HEK293 (cell line): ENCODE measurements at regions of chr6 and their contacts with region 1.

Region 1: GRCh38 chr6:35731736-35732532 is 4.9 kb upstream of the ARMC12 start:
- H3K4me3 ChIP-seq: peak overlapping the region; percentile 68
- H3K27ac ChIP-seq: peak overlapping the region; percentile 79
- H3K4me1 ChIP-seq: peaks cover 13% of the 10 kb centered on the region
- CTCF ChIP-seq: peak; percentile 88

Region 2: DNA sequence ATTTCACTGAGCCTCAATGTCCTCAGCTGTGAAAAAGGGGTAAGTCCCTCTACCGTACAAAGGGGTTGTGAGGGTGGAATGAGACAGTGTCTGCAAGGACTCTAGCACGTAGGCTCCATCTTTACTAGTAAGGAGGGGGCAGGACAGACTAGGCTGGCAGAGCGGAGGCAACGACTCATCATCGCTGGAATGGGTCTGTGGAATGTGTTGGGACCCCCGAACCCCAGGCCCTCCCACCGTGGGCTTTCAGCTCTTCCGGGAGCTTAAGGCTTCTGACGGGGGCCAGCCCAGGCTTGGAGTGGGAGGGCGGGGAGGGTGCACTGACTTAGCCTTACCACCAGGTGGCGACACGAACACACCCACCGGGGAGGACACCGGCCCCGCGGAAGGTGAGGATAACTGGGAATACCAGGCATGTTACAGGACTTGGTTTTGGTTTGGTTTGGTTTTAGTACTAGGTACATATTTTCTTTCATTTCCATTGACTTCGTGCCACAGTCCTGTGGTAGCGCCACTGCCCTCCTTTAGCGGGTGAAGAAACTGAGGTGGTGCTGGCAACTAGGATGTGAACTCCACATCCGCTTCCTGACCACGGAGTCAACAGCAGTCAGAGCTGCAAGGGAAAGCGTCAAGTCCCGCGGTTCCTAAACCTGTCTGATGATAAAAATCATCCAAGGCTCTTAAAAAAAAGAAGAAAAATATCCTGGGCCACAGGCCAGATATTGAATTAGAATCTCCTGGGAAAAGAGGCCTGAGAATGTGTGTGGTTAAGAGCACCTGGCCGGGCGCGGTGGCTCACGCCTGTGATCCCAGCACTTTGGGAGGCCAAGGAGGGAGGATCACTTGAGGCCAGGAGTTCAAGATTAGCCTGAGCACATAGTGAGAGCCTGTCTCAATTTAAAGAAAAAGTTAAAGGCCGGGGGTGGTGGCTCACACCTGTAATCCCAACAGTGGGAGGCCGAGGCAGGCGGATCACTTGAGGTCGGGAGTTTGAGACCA is 209.0 kb before region 1 on chr6:
- CTCF ChIA-PET with region 1: interaction called, 110 read pairs
- POLR2A ChIA-PET with region 1: interaction called, 9 read pairs
- H3K4me3 ChIP-seq: no peak overlapping the region
- H3K27ac ChIP-seq: no peak overlapping the region
- H3K4me1 ChIP-seq: no peaks in the 10 kb centered on the region
- CTCF ChIP-seq: peak; percentile 84

Region 3: DNA sequence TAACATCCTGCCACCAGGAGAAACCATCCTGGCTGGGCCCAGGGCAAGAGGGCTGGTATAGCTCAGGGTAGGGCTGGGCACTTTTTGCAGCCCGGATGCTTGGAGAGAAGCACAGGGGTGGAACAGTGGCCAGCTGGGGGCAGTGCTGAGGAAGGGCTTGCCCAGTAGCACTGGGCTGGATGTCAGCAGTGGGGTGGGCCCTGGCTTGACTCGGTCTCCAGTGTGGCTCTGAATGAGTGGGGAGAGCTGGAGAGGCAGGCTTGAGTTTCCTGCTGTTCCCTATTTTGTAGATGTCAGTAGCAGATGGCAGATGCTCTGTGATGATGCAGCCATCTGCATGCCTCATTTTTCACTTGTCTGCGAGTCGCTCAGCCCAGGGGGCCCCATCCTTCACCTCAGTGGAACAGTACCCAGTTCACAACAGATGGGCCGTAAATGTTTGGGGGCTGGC is 162.9 kb before region 1 on chr6:
- CTCF ChIA-PET with region 1: interaction called, 258 read pairs
- POLR2A ChIA-PET with region 1: no interaction called
- H3K4me3 ChIP-seq: no peak overlapping the region
- H3K27ac ChIP-seq: no peak overlapping the region
- H3K4me1 ChIP-seq: peaks cover 1% of the 10 kb centered on the region; the same call in 1 of the 2 replicates
- CTCF ChIP-seq: no peak; the same call in 1 of the 2 replicates

Region 4: GRCh38 chr6:35601331-35602132 is 130.4 kb before region 1 on chr6:
- CTCF ChIA-PET with region 1: interaction called, 34 read pairs
- POLR2A ChIA-PET with region 1: no interaction called
- H3K4me3 ChIP-seq: no peak overlapping the region
- H3K27ac ChIP-seq: no peak overlapping the region
- H3K4me1 ChIP-seq: peaks cover 35% of the 10 kb centered on the region
- CTCF ChIP-seq: no peak

Region 5: GRCh38 chr6:35663447-35664235 is 68.3 kb before region 1 on chr6:
- CTCF ChIA-PET with region 1: interaction called, 18 read pairs
- POLR2A ChIA-PET with region 1: interaction called, 4 read pairs
- H3K4me3 ChIP-seq: no peak overlapping the region
- H3K27ac ChIP-seq: no peak overlapping the region
- H3K4me1 ChIP-seq: peaks cover 6% of the 10 kb centered on the region; the same call in 1 of the 2 replicates
- CTCF ChIP-seq: no peak

Region 6: GRCh38 chr6:35751594-35751993 is 19.7 kb after region 1 on chr6:
- CTCF ChIA-PET with region 1: interaction called, 18 read pairs
- POLR2A ChIA-PET with region 1: no interaction called
- H3K4me3 ChIP-seq: no peak overlapping the region
- H3K27ac ChIP-seq: no peak overlapping the region
- H3K4me1 ChIP-seq: no peaks in the 10 kb centered on the region
- CTCF ChIP-seq: no peak